Cardiac septum (tissue), 1 donor: ENCODE measurements at regions of chr2 and their contacts with region 1.

Region 1: DNA sequence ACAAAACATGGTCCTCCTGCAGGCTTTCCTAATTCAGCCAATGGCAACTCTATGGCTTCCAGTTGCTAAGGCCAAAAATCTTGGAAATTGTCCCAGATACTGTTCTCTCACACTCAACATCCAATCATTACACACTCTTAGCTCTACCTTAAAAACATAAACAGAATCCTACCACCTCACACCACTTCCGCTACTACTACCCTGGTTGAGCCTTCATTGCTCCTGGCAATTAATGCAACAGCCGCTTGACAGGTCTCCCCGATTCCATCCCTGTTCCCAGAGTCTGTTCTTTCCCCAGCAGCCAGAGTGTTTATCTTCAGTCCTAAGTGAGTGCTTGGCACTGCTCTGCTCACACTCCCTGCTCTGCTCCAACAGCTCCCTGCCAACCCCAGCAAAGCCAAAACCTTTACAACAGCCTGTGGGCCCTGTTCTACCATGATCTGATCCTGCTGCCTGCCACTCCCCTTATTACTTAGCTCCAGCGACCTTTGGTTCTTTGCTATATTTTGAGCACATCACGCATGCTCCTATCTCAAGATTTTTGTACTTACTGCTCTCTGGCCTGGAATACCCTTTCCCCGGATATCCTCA is 67.5 kb upstream of the AMMECR1L start:
- DNase-seq: no peak

Region 2: GRCh38 chr2:127891811-127892210 is 61.4 kb before region 1 on chr2:
- intact Hi-C with region 1: loop called (anchors 5 kb)
- DNase-seq: peak; percentile 4